ENCODE measurements at regions of chr18 and their contacts with region 1.

Region 1: DNA sequence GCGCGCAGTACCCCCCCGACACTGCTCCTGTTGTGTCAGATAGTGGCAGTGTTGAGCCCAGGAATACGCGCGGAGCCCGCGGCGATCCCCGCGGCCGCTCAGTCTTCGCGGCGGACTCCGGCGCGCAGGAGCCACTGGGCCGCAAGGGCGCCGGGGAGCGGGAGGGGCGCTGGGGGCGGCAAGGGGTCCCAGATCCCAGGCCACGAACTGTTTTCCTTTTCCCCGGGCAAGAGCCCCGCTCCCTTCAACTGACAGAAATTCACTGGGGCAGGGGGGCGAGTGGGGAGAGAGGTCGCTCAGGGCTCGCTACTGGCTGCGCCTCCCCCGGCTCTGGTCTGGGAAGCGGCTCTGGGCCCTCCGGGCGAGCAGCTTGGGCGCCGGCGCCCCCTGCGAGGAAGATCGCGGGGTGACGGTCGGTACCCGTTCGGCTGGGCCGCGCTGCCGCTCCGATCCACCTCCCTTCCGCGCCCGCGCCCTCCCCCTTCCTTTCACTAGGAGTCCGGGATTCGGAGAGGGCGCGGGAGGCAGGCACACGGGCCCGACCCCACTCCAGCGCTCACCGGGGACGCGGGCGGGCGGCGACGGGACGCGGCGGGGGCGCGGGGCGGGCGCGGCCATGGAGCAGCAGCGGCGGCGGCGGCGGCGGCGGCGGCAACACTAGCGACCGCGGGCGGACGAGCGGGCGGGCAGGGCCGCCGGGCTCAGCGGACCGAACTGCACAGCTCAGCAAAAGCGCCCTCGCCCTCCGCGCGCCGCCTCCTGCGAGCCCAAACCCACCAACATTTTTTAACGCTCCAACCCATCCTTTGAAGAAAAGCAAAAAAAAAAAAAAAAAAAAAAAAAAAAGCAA is 1.4 kb upstream of the SETBP1 start:
- DNase-seq: peak; percentile 87
- CTCF ChIP-seq: peak; percentile 86

Region 2: GRCh38 chr18:44917216-44918141 is 238.2 kb after region 1 on chr18:
- in situ Hi-C with region 1: no loop called
- DNase-seq: no peak
- CTCF ChIP-seq: no peak

Region 3: GRCh38 chr18:45212181-45213039 is 533.1 kb after region 1 on chr18:
- in situ Hi-C with region 1: loop called (anchors 25 kb)
- DNase-seq: peak; percentile 38
- CTCF ChIP-seq: peak; percentile 92

Measured in GM13976 (cell line).